ENCODE measurements at regions of chr12 and their contacts with region 1.

Region 1: GRCh38 chr12:110896559-110896958 is 23.8 kb downstream of the MYL2 start:
- DNase-seq: no peak
- H3K4me3 Mint-ChIP-seq: no peak overlapping the region
- H3K27ac Mint-ChIP-seq: no peak overlapping the region
- H3K4me1 Mint-ChIP-seq: peaks cover 5% of the 10 kb centered on the region
- H3K27me3 Mint-ChIP-seq: peaks cover 3% of the 10 kb centered on the region

Region 2: DNA sequence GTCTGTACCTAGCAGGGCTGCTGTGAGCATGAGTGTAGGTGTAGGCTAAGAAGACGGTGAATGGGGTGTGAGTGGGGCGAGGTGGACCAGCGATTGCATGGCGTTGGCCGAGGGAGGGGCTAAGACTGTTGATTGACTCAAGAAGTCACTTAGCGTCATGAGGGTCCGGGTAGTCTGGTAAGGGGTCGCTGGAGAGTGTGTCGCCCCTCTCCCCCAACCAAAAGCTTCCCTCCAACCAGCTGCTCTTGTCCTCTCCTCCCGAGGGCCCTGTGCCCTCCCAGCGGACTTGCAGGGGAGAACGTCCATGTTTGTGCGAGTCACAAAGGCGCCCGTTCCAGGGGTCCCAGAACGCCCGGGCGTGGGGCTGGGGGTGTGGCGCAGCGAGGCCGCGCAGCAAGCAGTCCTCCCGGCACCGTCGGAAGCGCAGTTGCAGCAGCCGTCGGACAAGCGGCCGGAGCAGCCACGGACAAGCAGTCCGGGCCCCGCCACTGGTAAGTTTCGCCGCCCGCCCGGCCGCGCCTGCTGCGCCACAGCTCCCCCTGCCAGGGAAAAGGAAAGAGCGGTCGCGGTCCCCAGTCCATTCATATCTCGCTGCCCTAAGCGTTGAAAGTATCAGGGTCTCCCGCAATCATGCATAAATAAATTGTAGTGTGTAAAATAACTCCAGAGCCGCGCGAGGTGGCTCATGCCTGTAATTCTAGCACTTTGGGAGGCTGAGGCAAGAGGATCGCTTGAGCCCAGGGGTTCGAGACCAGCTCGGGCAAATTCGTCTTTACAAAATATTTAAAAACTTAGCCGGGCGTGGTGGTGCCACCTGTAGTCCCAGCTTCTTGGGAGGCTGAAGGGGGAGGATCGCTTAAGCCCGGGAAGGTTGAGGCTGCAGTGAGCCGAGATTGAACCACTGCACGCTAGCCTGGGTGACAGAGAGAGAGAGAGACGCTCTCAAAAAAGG is 49.7 kb before region 1 on chr12 and contains the start of gene CCDC63:
- CTCF ChIA-PET with region 1: interaction called, 12 read pairs
- intact Hi-C with region 1: no loop called
- DNase-seq: peak; percentile 44
- H3K4me3 Mint-ChIP-seq: peak within 1 kb of the TSS; percentile 58
- H3K27ac Mint-ChIP-seq: no peak within 1 kb of the TSS
- H3K4me1 Mint-ChIP-seq: peaks cover 8% of the 10 kb centered on the region
- H3K27me3 Mint-ChIP-seq: peaks cover 25% of the 10 kb centered on the region
- total RNA-seq, gene CCDC63: not detected

Region 3: GRCh38 chr12:110937104-110937641 is 40.6 kb after region 1 on chr12:
- CTCF ChIA-PET with region 1: interaction called, 4 read pairs
- intact Hi-C with region 1: loop called (anchors 1 kb)
- DNase-seq: peak; percentile 68
- H3K4me3 Mint-ChIP-seq: no peak overlapping the region
- H3K27ac Mint-ChIP-seq: no peak overlapping the region
- H3K4me1 Mint-ChIP-seq: peaks cover 7% of the 10 kb centered on the region
- H3K27me3 Mint-ChIP-seq: peaks cover 13% of the 10 kb centered on the region

Region 4: DNA sequence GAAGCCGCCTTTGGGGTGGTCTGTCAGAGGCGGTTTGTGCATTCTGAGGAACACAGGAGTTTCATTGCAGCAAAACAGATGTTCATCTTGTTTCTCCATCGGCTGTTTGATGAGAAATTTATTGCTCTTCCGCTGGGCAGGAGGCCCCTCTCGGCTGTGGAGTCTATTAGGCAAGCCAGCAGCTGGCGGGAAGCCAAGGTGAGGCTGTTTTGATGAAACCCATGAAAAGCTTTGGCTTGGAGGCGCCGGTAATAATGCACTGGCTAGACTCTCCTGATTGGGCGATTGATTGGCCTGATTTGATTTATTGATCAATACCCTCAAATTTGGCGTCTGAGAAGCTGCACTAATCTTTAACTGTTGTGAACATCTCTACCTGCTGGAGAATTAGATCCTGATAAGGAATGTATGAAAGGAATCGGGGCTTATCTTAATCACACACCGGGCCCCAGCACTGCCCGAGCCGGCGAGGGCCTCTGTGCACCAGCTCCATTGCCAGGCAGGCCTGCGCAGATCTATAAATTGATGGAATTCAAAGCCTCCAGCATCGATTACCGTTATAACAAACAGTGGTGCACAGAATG is 284.7 kb after region 1 on chr12:
- CTCF ChIA-PET with region 1: no interaction called
- intact Hi-C with region 1: no loop called
- DNase-seq: peak; percentile 14
- H3K4me3 Mint-ChIP-seq: no peak overlapping the region
- H3K27ac Mint-ChIP-seq: no peak overlapping the region
- H3K4me1 Mint-ChIP-seq: peaks cover 7% of the 10 kb centered on the region
- H3K27me3 Mint-ChIP-seq: peaks cover 24% of the 10 kb centered on the region

Region 5: DNA sequence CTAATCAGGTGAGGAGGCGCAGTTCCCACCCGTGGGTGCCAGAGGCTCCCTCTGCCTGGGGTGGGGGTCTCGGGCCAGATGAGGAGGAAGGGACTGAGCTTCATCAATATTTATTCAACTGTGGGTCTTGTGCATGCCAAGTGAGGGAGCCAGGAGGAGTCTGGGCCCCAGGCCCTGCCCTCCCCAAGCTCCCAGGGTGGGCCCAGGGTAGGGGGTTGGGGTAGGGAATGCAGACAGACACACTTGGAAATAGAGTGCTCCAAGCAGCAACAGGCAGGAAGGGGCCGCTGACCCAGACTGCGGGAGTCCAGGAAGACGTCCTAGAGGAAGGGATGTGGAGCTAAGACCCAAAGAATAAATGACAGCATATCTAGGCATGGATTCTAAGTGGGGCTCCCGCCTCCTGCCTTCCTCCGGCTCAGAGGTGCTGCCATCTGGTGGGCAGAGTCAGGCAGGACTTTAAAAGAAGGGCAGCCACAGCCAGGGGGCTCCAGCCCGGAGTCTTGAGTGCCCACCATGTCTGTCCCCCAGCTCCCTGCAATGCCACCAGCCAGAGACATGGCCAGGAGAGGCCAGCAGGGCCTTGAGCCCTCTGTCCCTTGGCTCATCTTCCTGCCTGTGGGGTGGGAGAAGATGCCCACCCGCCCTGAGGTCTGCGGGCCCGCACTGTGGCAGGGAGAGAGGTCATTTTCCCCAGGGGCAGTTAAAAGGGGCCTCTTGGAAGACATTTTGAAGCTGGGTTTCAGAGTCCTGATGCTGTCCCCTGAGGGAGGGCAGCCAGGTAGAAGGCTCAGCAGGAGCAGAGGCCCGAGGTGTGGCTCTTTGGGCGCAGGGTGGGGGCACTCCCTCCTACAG is 402.2 kb after region 1 on chr12:
- CTCF ChIA-PET with region 1: interaction called, 3 read pairs
- intact Hi-C with region 1: loop called (anchors 5 kb)
- DNase-seq: peak; percentile 62
- H3K4me3 Mint-ChIP-seq: no peak overlapping the region
- H3K27ac Mint-ChIP-seq: no peak overlapping the region
- H3K4me1 Mint-ChIP-seq: no peaks in the 10 kb centered on the region
- H3K27me3 Mint-ChIP-seq: no peaks in the 10 kb centered on the region

Region 6: DNA sequence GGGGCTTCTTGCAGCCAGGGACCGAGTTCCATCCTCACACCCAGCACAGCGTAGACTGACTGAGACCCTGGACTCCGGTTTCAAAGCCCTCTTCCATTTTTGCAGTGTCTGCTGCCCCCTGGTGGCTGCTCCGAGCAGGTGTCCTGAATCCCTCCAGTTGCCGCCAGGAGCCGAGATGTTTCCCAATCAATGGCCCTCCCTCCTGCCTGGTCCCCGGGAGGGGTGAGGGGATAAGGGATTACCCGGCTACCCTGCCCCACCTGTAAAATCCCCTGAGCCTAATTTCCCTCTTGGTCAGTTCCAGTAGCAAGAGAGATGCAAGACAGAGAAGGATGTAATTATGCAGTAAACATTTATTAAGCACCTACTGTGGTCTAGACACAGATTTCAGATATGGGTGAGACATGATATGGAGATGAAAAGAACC is 417.3 kb after region 1 on chr12:
- CTCF ChIA-PET with region 1: interaction called, 4 read pairs
- intact Hi-C with region 1: loop called (anchors 2 kb)
- DNase-seq: peak; percentile 77
- H3K4me3 Mint-ChIP-seq: no peak overlapping the region
- H3K27ac Mint-ChIP-seq: no peak overlapping the region
- H3K4me1 Mint-ChIP-seq: peaks cover 11% of the 10 kb centered on the region
- H3K27me3 Mint-ChIP-seq: peaks cover 10% of the 10 kb centered on the region

Measured in activated naive CD4-positive, alpha-beta T cell treated with anti-CD3 and anti-CD28 coated beads for 36 hours (primary cell).